H1 (cell line): ENCODE measurements at regions of chr2 and their contacts with region 1.

Region 1: DNA sequence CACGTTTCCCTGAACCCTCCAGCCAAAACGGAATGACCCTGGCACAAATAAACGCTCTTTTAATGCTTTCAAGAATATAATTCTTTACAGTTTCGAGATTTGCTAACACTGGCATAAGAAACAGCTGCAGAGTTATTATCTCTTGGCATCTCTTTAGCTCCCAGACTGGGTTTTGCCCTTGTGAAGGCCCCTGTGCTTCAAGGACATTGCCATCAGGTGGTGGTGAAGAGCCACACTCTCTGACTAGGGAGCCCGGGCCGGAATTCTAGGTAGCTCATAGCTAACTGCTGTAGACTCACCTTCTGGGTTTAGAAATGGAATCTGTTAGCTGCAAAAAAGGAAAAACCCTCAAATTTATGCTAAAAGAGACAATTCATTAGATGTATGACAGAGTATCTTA is 13.3 kb upstream of the GALNT14 start:
- DNase-seq: no peak
- H3K4me3 ChIP-seq: no peak overlapping the region
- H3K27ac ChIP-seq: no peak overlapping the region
- H3K4me1 ChIP-seq: no peaks in the 10 kb centered on the region
- H3K27me3 ChIP-seq: no peaks in the 10 kb centered on the region; a peak in 2 of 7 replicates
- CTCF ChIP-seq: peak; percentile 25 to 41 (median 39); a peak in 3 of 4 replicates
- EP300 ChIP-seq: no peak
- POLR2A ChIP-seq: no peak
- RAD21 ChIP-seq: peak; percentile 44 to 61

Region 2: DNA sequence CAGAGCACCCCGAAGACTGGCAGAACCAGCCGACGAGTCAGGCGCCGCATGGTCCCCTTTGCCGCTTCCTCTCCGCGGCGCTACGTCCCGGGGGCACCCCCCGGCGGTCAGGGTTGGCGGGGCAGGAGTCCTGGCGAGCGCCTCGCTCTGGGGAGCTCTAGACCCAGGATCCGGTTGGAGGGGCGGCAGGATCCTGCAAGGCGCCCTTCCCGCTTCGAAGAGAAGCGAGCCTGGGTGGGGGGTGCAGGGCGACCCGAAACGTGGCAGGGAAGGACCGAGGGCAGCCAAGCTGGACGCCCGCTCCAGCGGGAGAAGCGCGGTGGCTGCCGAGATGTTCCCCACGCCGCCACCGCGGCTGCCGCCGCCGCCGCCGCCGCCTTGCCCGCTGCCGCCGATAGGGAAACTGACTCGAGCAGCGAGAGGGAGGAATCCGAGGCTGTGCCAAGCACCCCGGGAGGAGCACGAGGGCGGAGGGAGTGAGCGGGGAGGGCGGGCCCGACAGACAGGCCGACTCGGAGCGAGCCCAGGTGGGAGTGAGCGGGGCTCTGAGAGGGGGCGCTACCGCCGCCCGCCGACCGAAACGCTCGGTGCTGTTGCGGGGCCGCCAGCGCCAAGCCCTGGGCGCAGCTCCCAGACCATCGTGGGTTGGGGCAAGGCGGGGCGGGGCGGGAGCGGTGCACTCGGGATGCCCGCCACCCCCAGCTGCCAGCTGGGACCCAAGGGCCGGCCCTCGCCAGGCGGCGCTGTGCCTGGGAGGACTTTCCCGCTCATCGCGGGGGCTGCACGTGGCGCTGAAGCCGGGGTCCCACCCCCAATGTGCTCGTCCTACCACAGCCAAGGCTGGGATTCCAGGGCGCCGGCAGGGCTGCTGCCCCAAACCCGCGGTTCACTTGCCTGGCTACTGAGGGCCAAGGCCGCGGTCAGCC is 13.2 kb before region 1 on chr2 and contains the start of gene GALNT14:
- CTCF ChIA-PET with region 1: interaction called, 40 read pairs
- POLR2A ChIA-PET with region 1: no interaction called
- DNase-seq: peak; percentile 33 to 86
- H3K4me3 ChIP-seq: peak within 1 kb of the TSS; percentile 33 to 63 (median 43)
- H3K27ac ChIP-seq: no peak within 1 kb of the TSS
- H3K4me1 ChIP-seq: peaks cover 0 to 5% (median 5%) of the 10 kb centered on the region in 4 experiments; a peak in 4 of 7 replicates
- H3K27me3 ChIP-seq: peaks cover 13 to 50% (median 46%) of the 10 kb centered on the region in 4 experiments
- CTCF ChIP-seq: peak; percentile 41 to 57 (median 47)
- EP300 ChIP-seq: peak in 1 of 2 experiments; percentile 68; a peak in 1 of 3 replicates
- POLR2A ChIP-seq: no peak
- RAD21 ChIP-seq: peak; percentile 38 to 42
- total RNA-seq, gene GALNT14: 10.3 and 13.7 TPM in 2 replicates

Region 3: GRCh38 chr2:31161637-31162036 is 10.1 kb after region 1 on chr2:
- CTCF ChIA-PET with region 1: interaction called, 91 read pairs
- POLR2A ChIA-PET with region 1: no interaction called
- DNase-seq: peak in 1 of 2 experiments; percentile 16
- H3K4me3 ChIP-seq: no peak overlapping the region
- H3K27ac ChIP-seq: no peak overlapping the region
- H3K4me1 ChIP-seq: no peaks in the 10 kb centered on the region
- H3K27me3 ChIP-seq: no peaks in the 10 kb centered on the region
- CTCF ChIP-seq: no peak
- EP300 ChIP-seq: no peak
- POLR2A ChIP-seq: no peak
- RAD21 ChIP-seq: no peak

Region 4: DNA sequence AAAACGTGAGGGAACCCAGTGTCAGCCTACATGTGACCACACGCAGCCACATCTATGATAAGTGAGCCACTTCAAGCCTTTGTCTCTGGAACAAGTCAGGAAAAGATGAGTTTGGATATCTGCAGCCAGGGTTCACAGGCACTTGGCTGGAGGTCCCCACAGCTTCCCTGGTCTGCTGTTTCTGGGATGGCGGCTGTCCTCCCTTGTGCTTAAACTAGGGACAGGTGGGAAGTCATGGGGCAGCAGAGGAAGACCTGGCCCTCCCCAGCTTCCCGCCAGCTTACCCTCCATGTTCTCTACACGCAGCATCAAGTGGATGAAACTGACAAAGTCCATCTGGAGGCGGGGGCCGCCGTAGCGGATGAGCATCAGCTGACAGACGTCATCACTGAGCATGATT is 25.2 kb after region 1 on chr2:
- CTCF ChIA-PET with region 1: interaction called, 91 read pairs
- POLR2A ChIA-PET with region 1: no interaction called
- DNase-seq: peak in 1 of 2 experiments; percentile 35
- H3K4me3 ChIP-seq: no peak overlapping the region
- H3K27ac ChIP-seq: no peak overlapping the region
- H3K4me1 ChIP-seq: no peaks in the 10 kb centered on the region
- H3K27me3 ChIP-seq: no peaks in the 10 kb centered on the region
- CTCF ChIP-seq: no peak
- EP300 ChIP-seq: no peak
- POLR2A ChIP-seq: no peak
- RAD21 ChIP-seq: no peak

Region 5: DNA sequence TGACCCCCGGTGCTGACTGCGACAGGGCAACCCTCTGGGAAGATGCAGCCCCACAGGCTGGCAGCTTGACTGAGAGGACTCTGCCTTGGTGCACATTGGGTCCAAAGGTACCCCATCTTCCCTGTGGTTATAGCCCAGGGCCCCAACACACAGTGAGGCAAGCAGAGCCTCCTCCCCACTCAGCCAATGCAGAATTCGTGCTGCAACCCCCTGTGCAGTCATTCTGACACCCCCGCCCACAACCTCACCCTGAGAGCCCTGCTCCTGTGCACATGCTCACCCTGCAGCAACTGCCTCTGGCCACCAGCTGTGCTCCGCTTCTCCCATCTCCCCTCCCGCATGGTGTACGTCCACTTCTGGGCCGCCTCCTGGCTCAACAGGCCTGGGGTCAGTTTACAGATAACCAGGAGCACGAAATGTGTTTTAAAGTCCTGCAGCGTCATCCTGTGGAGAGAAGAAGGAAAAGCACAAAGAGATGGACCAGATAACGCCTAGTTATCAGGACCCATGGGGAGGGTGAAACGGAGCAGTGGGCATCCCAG is 41.4 kb after region 1 on chr2:
- CTCF ChIA-PET with region 1: interaction called, 11 read pairs
- POLR2A ChIA-PET with region 1: no interaction called
- DNase-seq: peak in 1 of 2 experiments; percentile 47
- H3K4me3 ChIP-seq: no peak overlapping the region
- H3K27ac ChIP-seq: no peak overlapping the region
- H3K4me1 ChIP-seq: no peaks in the 10 kb centered on the region; a peak in 1 of 7 replicates
- H3K27me3 ChIP-seq: no peaks in the 10 kb centered on the region; a peak in 1 of 7 replicates
- CTCF ChIP-seq: peak in 2 of 3 experiments; percentile 58 to 60; a peak in 3 of 4 replicates
- EP300 ChIP-seq: no peak
- POLR2A ChIP-seq: no peak
- RAD21 ChIP-seq: peak; percentile 72 to 84